ENCODE measurements at regions of chr16 and their contacts with region 1.

Region 1: DNA sequence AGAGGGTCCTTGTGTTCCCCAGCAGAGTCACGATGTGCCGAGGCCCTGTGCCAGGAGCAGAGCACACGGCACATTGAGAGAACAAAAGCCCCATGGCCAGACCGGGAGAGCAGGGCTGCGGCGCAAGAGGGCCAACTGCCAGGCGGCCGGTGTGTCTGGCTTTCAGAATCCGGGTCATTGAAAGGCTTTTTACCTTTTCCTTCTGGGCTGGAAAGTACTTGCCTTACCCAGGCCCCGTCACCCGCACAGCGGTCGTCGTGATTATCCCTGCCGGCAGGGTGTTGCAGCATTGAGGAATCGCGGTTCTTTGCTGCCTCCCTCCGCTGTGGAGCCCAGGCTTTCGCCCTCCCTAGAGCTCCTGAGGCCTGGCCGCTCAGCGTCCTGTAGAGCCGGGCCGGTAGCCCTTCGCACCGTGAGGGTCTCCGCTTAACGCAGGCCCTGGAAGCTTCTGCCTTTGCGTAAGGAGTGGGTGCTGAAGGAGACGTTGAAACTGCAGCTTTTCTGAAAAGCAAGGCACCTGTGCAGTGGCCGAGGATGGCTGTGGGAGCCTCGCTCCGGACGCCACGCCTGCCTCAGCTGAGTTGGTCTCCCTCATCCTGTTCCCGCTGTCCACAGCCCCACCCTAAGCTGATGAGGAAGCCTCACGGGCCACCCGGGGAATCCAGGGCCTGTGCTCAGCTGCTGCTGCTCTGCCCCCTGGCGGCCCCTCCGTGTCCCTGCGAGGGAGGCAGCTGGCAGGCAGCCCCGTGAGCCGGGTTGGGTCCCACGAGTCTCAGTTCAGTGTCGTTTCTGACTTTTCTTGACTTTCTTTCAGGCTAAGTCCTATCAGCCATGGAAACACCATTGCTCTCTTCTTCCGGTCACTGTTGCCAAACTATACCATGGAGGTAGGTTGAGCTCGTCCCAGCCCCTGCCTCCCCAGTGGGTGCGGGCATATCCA is 8.6 kb upstream of the MC1R start:
- DNase-seq: peak; percentile 79 to 80
- ATAC-seq: peak; percentile 64 to 87
- H3K4me3 ChIP-seq: no peak overlapping the region
- H3K27ac ChIP-seq: peak overlapping the region in 1 of 2 experiments; percentile 68; a peak in 3 of 6 replicates
- H3K4me1 ChIP-seq: peaks cover 4% of the 10 kb centered on the region; the same call in 2 of the 3 replicates
- CTCF ChIP-seq: peak; percentile 66
- EP300 ChIP-seq: no peak
- POLR2A ChIP-seq: 0 out of 2 replicates have a peak, but pooled peaks have one; percentile 11
- RAD21 ChIP-seq: peak; percentile 43 to 55; a peak in 4 of 5 replicates

Region 2: GRCh38 chr16:89775223-89775622 is 134.8 kb before region 1 on chr16:
- CTCF ChIA-PET with region 1: no interaction called
- POLR2A ChIA-PET with region 1: no interaction called
- DNase-seq: no peak
- ATAC-seq: no peak
- H3K4me3 ChIP-seq: no peak overlapping the region
- H3K27ac ChIP-seq: no peak overlapping the region
- H3K4me1 ChIP-seq: no peaks in the 10 kb centered on the region
- CTCF ChIP-seq: no peak
- EP300 ChIP-seq: no peak
- POLR2A ChIP-seq: no peak
- RAD21 ChIP-seq: no peak

Region 3: GRCh38 chr16:89873972-89874689 is 35.9 kb before region 1 on chr16:
- CTCF ChIA-PET with region 1: interaction called, 4 read pairs
- POLR2A ChIA-PET with region 1: interaction called, 19 read pairs
- DNase-seq: peak; percentile 77 to 98
- ATAC-seq: peak; percentile 62 to 82
- H3K4me3 ChIP-seq: peak overlapping the region; percentile 85
- H3K27ac ChIP-seq: peak overlapping the region; percentile 96 to 99
- H3K4me1 ChIP-seq: peaks cover 12% of the 10 kb centered on the region; the same call in 1 of the 3 replicates
- CTCF ChIP-seq: no peak
- EP300 ChIP-seq: no peak
- POLR2A ChIP-seq: no peak
- RAD21 ChIP-seq: no peak

Region 4: GRCh38 chr16:89887243-89887642 is 22.8 kb before region 1 on chr16:
- CTCF ChIA-PET with region 1: interaction called, 20 read pairs
- POLR2A ChIA-PET with region 1: no interaction called
- DNase-seq: no peak
- ATAC-seq: no peak
- H3K4me3 ChIP-seq: no peak overlapping the region
- H3K27ac ChIP-seq: no peak overlapping the region
- H3K4me1 ChIP-seq: no peaks in the 10 kb centered on the region
- CTCF ChIP-seq: no peak
- EP300 ChIP-seq: no peak
- POLR2A ChIP-seq: no peak
- RAD21 ChIP-seq: no peak

Region 5: GRCh38 chr16:89899879-89900486 is 10.1 kb before region 1 on chr16:
- CTCF ChIA-PET with region 1: interaction called, 19 read pairs
- POLR2A ChIA-PET with region 1: interaction called, 4 read pairs
- DNase-seq: no peak
- ATAC-seq: no peak
- H3K4me3 ChIP-seq: no peak overlapping the region
- H3K27ac ChIP-seq: no peak overlapping the region
- H3K4me1 ChIP-seq: no peaks in the 10 kb centered on the region
- CTCF ChIP-seq: no peak
- EP300 ChIP-seq: no peak
- POLR2A ChIP-seq: no peak
- RAD21 ChIP-seq: no peak